Heart left ventricle (tissue), 16 donors: ENCODE measurements at regions of chr3 and their contacts with region 1.

Region 1: DNA sequence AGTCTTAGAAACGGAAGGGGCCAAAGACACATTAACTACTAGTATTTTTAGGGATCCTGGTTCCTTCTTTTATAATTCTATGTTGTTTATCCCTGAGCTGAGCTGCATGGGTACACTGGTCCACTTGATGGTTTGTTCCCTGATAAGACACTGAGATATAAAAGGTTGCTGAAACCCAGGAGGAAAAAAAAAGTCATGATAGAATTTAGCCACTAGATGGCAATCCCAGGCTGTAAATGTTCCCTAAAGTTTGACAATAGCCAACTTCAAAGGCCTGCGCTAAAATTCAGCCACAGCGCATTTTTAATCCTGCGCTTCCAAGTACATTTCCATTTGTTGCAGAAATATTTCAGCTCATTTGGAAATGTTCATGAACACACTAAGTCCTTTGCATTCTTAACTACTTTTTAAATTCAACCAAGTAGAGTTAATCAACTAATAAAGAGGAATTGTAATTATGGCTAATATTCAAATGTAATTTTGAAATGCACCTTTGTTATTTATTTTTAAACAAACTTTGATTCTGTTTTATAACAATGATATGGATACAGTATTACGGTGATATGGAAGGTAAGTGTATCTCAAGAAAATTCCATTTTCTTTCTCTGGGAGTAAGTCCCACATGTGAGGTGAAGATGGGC is 249.3 kb upstream of the FEZF2 start:
- DNase-seq: no peak
- ATAC-seq: peak; percentile 48 to 76 (median 59)
- H3K4me3 ChIP-seq: no peak overlapping the region
- H3K27ac ChIP-seq: no peak overlapping the region
- H3K4me1 ChIP-seq: peaks cover 0 to 3% (median 0%) of the 10 kb centered on the region in 12 donors
- H3K27me3 ChIP-seq: no peaks in the 10 kb centered on the region
- CTCF ChIP-seq: peak; percentile 50 to 73 (median 64)
- POLR2A ChIP-seq: no peak

Region 2: DNA sequence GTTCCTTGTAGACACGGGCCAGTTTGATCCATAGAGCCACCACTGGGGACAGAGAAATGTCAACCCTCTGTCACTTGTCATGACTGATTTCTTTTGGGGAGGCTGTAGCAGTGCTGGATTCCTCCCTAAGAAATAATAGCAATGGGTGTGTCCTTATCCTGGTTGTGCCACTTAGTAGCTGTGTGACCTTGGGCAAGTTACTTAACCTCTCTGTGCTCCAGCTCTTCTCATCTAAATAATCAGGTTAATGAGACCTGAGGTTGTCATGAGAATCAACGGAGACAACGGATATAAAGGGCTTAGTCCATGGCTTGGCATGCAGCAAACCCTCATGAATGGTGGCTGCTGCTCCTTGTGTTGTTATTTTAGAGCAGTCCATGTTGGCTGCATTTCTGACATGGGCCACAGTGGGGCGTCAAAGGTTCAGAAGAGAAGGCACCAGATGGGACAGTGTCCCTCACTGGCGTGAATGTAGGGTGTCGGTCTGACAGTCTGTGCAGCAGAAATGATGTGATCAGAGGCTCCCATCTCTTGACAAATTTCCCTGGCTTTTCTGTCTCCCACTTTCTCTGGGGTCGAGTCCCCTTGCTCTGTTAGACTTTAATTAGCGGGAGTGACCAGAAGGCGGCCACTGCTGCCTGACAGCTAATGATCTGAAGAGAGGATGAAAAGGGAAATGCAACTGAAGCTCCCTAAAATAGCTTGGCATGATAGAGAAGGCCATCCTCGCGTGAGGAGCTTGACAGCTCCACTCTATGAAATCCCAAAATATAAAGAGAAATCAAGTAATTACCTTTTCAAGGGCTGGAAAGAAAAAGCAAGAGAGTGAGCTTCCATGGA is 43.1 kb after region 1 on chr3:
- intact Hi-C with region 1: loop called in 2 of 10 experiments (anchors 5 kb)
- DNase-seq: peak; percentile 42 to 67 (median 53)
- ATAC-seq: peak; percentile 38 to 88 (median 85)
- H3K4me3 ChIP-seq: peak overlapping the region in 1 of 12 donors; percentile 21
- H3K27ac ChIP-seq: peak overlapping the region in 2 of 12 donors; percentile 17 to 24
- H3K4me1 ChIP-seq: peaks cover 0 to 10% (median 0%) of the 10 kb centered on the region in 12 donors
- H3K27me3 ChIP-seq: no peaks in the 10 kb centered on the region
- CTCF ChIP-seq: peak; percentile 46 to 71 (median 62)
- POLR2A ChIP-seq: no peak

Region 3: DNA sequence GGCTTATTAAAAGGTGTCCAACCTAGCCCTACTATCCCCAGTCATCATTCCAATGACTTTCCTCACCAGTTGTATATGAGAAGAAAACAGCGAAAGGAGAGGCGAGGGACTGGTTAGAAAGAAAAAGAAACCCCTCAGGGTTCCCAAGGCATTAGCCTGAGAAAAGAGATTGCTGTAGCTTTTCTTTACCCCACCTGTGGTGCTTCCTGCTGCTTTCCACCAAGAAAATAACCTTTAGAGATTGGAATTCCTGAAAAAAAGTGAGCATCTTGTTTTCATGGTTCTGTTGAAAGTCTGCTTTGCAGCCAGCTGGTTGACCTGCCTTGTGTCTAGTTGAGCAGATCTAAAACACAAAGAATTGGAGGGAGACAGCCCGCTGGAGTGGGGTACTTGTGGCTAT is 56.2 kb after region 1 on chr3:
- intact Hi-C with region 1: no loop called
- DNase-seq: no peak
- ATAC-seq: no peak
- H3K4me3 ChIP-seq: no peak overlapping the region
- H3K27ac ChIP-seq: no peak overlapping the region
- H3K4me1 ChIP-seq: peaks cover 0 to 7% (median 0%) of the 10 kb centered on the region in 12 donors
- H3K27me3 ChIP-seq: peaks cover 0 to 4% (median 0%) of the 10 kb centered on the region in 9 donors
- CTCF ChIP-seq: no peak
- POLR2A ChIP-seq: no peak

Region 4: DNA sequence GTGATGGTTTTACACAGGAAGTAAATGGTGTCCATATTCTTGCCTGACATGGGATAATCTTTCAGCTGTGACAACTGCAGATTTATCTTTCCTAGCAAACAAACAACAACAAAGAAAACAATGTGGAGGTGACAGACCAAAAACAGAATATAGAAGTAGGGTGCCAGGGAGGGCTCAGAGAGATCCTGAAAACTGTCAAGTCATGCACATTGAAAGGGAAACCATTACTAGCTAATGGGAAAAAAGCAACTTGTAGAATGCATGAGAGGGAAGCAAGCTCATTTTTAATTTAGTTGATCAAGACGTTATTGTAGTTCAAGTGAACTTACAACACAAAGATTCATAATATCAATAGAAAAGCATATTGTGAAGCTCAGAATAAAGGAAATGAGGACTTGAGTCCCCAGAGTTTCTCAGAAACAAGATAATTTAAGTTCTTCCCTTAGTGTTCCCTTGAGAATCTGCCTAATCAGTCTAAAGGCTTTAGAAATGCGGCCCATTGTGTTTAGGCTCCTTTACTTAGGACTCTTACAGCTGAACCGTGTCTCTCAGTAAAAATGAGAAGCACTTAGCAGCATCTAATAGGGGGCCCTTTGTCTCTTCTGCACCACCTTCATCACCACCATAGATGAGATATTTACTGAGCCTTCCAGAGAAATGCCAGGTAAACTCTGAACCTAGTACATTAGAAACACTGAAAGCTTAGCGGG is 368.2 kb after region 1 on chr3:
- intact Hi-C with region 1: no loop called
- DNase-seq: no peak
- ATAC-seq: no peak
- H3K4me3 ChIP-seq: no peak overlapping the region
- H3K27ac ChIP-seq: no peak overlapping the region
- H3K4me1 ChIP-seq: no peaks in the 10 kb centered on the region
- H3K27me3 ChIP-seq: no peaks in the 10 kb centered on the region
- CTCF ChIP-seq: no peak
- POLR2A ChIP-seq: no peak

Region 5: DNA sequence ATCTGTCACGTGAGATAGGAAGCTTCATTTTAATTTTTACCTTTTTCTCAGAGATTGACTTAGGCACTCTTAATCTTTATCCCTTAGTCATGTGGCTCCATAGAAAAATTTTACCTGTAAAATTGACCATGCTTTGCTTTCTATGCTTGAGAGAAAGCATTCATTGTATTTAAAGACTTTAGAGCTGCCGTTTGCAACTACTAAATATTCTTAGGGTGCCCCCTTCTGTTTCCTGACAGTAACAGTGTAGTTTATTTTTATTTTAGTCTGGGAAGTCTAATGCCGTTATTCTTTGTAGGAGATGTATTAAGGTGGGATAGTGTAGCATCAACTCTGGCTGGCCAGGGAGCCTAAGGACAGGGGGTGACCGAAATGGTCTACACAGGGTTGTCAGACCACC is 571.0 kb after region 1 on chr3:
- intact Hi-C with region 1: loop called in 5 of 10 experiments (anchors 5 to 10 kb)
- DNase-seq: no peak
- ATAC-seq: peak in 2 of 4 donors; percentile 22 to 38
- H3K4me3 ChIP-seq: no peak overlapping the region
- H3K27ac ChIP-seq: no peak overlapping the region
- H3K4me1 ChIP-seq: no peaks in the 10 kb centered on the region
- H3K27me3 ChIP-seq: no peaks in the 10 kb centered on the region
- CTCF ChIP-seq: peak in 11 of 12 donors; percentile 23 to 65 (median 48)
- POLR2A ChIP-seq: no peak

Region 6: DNA sequence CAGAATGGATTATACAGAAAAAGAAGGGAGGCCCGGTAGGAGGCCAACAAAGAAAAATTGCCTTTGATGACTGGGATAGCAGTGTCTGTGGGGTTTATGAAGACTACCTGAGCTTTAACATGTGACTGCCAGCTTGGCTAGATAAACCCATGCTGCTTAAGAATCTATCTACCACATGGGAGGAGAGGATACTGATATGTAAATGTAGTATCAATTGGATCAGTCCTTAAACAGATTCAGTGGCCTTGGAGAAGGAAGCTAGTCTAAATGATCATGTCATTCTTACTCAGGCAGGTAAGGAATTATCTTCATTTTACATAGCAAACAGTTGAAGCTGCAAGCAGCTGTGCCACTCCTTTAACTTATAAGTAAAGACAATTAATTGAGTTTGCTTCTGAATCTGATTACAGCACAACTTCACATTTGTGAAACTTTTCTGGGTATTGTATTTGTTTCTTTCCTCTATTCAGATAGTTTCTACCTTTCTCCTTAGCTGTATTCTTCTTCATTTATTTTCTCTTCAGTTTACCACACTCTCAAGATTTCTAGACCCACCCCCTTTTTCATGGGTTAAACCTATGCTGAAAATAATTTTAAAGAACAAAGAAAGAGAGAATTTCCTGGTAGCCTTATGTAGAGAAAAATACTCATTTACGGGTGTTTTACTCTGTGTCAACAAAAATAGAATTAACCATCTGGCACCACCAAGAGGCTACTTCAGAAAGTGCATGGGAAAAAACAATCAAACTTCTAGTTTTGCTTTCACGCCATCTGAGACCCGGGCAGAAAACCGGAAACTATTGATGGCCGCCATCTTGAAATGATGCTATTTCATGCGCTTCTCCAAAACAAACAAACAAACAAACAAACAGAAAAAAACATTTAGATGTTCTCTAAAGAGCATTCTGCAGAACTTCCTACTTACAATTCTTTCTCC is 605.7 kb after region 1 on chr3:
- intact Hi-C with region 1: loop called in 6 of 10 experiments (anchors 5 to 10 kb)
- DNase-seq: no peak
- ATAC-seq: peak in 1 of 4 donors; percentile 50
- H3K4me3 ChIP-seq: no peak overlapping the region
- H3K27ac ChIP-seq: no peak overlapping the region
- H3K4me1 ChIP-seq: peaks cover 0 to 7% (median 0%) of the 10 kb centered on the region in 12 donors
- H3K27me3 ChIP-seq: no peaks in the 10 kb centered on the region
- CTCF ChIP-seq: peak; percentile 17 to 63 (median 48)
- POLR2A ChIP-seq: no peak

Region 7: GRCh38 chr3:63333842-63334241 is 711.2 kb after region 1 on chr3:
- intact Hi-C with region 1: loop called in 6 of 10 experiments (anchors 5 to 10 kb)
- DNase-seq: no peak
- ATAC-seq: no peak
- H3K4me3 ChIP-seq: no peak overlapping the region
- H3K27ac ChIP-seq: no peak overlapping the region
- H3K4me1 ChIP-seq: peaks cover 0 to 5% (median 0%) of the 10 kb centered on the region in 12 donors
- H3K27me3 ChIP-seq: no peaks in the 10 kb centered on the region
- CTCF ChIP-seq: peak in 6 of 12 donors; percentile 11 to 43 (median 28)
- POLR2A ChIP-seq: no peak

Region 8: GRCh38 chr3:63818281-63819150 is 1195.8 kb after region 1 on chr3:
- intact Hi-C with region 1: loop called in 5 of 10 experiments (anchors 5 to 10 kb)
- DNase-seq: peak in 4 of 5 donors; percentile 29 to 59 (median 33)
- ATAC-seq: peak in 3 of 4 donors; percentile 46 to 62 (median 49)
- H3K4me3 ChIP-seq: no peak overlapping the region
- H3K27ac ChIP-seq: no peak overlapping the region
- H3K4me1 ChIP-seq: peaks cover 0 to 3% (median 0%) of the 10 kb centered on the region in 12 donors
- H3K27me3 ChIP-seq: no peaks in the 10 kb centered on the region
- CTCF ChIP-seq: peak; percentile 80 to 93 (median 84)
- POLR2A ChIP-seq: no peak